Caco-2 (cell line): ENCODE measurements at regions of chr17 and their contacts with region 1.

Region 1: GRCh38 chr17:48878918-48879898 is 13.4 kb upstream of the ATP5MC1 start:
- DNase-seq: peak; percentile 86 to 90
- H3K4me3 ChIP-seq: no peak overlapping the region
- H3K4me3 Mint-ChIP-seq: no peak overlapping the region
- H3K27ac Mint-ChIP-seq: no peak overlapping the region
- H3K4me1 ChIP-seq: peaks cover 11% of the 10 kb centered on the region
- H3K4me1 Mint-ChIP-seq: peaks cover 12% of the 10 kb centered on the region
- H3K27me3 ChIP-seq: no peaks in the 10 kb centered on the region
- H3K27me3 Mint-ChIP-seq: no peaks in the 10 kb centered on the region
- CTCF ChIP-seq: peak; percentile 100

Region 2: GRCh38 chr17:48704361-48705248 is 174.6 kb before region 1 on chr17:
- CTCF ChIA-PET with region 1: interaction called, 15 read pairs
- POLR2A ChIA-PET with region 1: no interaction called
- intact Hi-C with region 1: no loop called
- DNase-seq: peak in 1 of 2 experiments; percentile 34
- H3K4me3 ChIP-seq: no peak overlapping the region
- H3K4me3 Mint-ChIP-seq: no peak overlapping the region
- H3K27ac Mint-ChIP-seq: no peak overlapping the region
- H3K4me1 ChIP-seq: no peaks in the 10 kb centered on the region
- H3K4me1 Mint-ChIP-seq: no peaks in the 10 kb centered on the region
- H3K27me3 ChIP-seq: peaks cover 5% of the 10 kb centered on the region; the same call in 1 of the 2 replicates
- H3K27me3 Mint-ChIP-seq: peaks cover 36% of the 10 kb centered on the region
- CTCF ChIP-seq: no peak

Region 3: DNA sequence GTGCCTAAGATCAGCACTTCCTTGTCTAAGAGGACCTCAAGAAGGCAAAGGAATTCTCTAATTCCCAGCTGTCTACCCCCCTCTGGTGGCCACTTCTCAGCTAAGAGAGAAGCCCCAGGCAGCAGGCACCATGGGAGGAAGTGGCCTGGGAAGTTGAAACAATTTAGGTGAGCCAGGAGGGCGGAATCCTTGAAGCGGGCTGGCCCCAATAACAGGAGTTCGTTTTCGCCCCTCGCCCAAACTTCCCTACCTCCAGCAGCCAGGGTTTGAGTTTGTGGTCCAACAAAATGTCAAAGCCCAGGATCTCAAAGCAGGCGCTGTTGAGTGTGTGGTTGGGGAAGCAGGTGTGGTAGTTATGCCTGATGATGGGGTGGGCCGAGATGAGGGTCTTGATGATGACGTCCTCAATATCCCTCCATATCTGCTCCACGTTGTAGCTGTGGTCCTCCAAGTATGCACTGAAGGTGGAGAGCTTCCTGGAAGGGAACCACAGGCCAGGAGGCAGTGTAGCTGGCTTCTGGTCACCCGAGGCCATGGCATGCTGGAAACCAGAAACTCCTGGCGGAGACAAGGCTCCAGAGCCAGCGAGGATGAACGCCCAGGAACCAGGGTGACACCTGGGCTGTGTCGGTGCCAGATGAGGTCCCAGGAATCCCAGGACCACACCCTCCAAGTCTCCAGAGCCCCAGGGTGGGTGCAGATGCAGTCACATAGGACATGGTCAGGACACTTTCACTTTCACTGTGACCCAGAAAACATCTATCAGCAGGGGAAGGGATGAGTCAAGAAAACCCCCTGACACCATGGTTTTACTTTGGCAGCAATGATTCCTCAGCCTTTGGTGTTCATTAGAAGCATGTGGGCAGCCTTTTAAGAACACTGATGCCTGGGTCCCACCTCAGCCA is 87.8 kb before region 1 on chr17:
- CTCF ChIA-PET with region 1: interaction called, 1,184 read pairs
- POLR2A ChIA-PET with region 1: interaction called, 3 read pairs
- intact Hi-C with region 1: loop called (anchors 1 kb)
- DNase-seq: peak; percentile 97
- H3K4me3 ChIP-seq: no peak overlapping the region
- H3K4me3 Mint-ChIP-seq: no peak overlapping the region
- H3K27ac Mint-ChIP-seq: peak overlapping the region; percentile 51
- H3K4me1 ChIP-seq: peaks cover 50% of the 10 kb centered on the region
- H3K4me1 Mint-ChIP-seq: peaks cover 52% of the 10 kb centered on the region
- H3K27me3 ChIP-seq: no peaks in the 10 kb centered on the region
- H3K27me3 Mint-ChIP-seq: no peaks in the 10 kb centered on the region
- CTCF ChIP-seq: peak; percentile 98 to 100

Region 4: GRCh38 chr17:48830840-48831548 is 48.2 kb before region 1 on chr17 and contains the start of gene CALCOCO2:
- CTCF ChIA-PET with region 1: interaction called, 37 read pairs
- POLR2A ChIA-PET with region 1: no interaction called
- intact Hi-C with region 1: loop called (anchors 1 kb)
- DNase-seq: peak; percentile 99 to 100
- H3K4me3 ChIP-seq: peak within 1 kb of the TSS; percentile 89
- H3K4me3 Mint-ChIP-seq: peak within 1 kb of the TSS; percentile 99
- H3K27ac Mint-ChIP-seq: peak within 1 kb of the TSS; percentile 99
- H3K4me1 ChIP-seq: peaks cover 10% of the 10 kb centered on the region
- H3K4me1 Mint-ChIP-seq: no peaks in the 10 kb centered on the region
- H3K27me3 ChIP-seq: no peaks in the 10 kb centered on the region
- H3K27me3 Mint-ChIP-seq: no peaks in the 10 kb centered on the region
- CTCF ChIP-seq: peak in 1 of 2 experiments; percentile 24
- total RNA-seq, gene CALCOCO2: 233 and 251 TPM in 2 replicates

Region 5: GRCh38 chr17:48860034-48860433 is 19.2 kb before region 1 on chr17:
- CTCF ChIA-PET with region 1: interaction called, 22 read pairs
- POLR2A ChIA-PET with region 1: interaction called, 5 read pairs
- intact Hi-C with region 1: loop called (anchors 1 kb)
- DNase-seq: peak in 1 of 2 experiments; percentile 40
- H3K4me3 ChIP-seq: no peak overlapping the region
- H3K4me3 Mint-ChIP-seq: no peak overlapping the region
- H3K27ac Mint-ChIP-seq: no peak overlapping the region
- H3K4me1 ChIP-seq: peaks cover 5% of the 10 kb centered on the region
- H3K4me1 Mint-ChIP-seq: peaks cover 3% of the 10 kb centered on the region
- H3K27me3 ChIP-seq: no peaks in the 10 kb centered on the region
- H3K27me3 Mint-ChIP-seq: no peaks in the 10 kb centered on the region
- CTCF ChIP-seq: peak; percentile 56 to 78